Endothelial cell of umbilical vein (primary cell): ENCODE measurements at regions of chr7 and their contacts with region 1.

Region 1: DNA sequence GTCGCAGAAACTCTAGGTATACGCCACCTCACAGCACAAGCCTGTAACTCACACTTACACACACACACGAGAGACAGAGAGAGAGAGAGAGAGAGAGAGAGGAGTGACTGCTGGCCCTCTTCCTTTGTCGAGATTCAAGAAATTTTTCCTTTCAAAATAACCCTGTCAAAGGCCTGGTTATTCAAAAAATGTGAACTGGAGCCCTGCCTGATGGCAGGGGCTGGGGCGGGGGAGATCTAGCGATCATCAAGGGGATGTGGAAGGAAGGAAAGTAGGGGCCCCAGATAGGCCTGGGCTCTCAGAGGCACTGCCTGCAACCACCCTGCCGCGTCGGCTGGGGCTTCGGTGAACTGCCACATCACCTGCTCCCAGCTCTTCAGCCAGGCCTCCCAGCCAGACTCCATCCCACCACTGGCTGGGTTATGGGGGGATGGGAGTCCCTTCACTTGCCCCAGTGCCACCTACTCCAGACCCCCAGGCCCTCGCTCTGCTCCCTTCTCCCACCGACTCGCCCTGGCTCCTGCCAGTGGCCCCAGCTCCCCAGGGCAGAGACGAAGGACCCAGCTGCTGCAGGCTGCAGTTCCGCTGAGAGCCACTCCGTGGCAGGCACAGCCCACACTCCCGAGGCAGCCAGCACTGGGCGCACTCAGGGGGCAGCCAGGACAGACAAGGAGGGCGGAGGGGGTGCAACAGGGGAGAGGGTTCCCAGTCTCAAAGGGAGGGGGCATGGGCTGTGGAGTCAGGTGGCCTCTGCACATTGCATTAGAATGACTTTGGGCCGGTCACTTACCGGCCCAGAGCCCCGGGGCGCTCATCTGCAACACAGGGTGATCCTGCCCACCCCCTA is 15.3 kb downstream of the KCNH2 start:
- DNase-seq: peak; percentile 36
- H3K4me3 ChIP-seq: no peak overlapping the region
- H3K27ac ChIP-seq: no peak overlapping the region
- H3K4me1 ChIP-seq: no peaks in the 10 kb centered on the region
- H3K27me3 ChIP-seq: peaks cover 17 to 23% of the 10 kb centered on the region in 2 experiments
- CTCF ChIP-seq: peak; percentile 81 to 96
- POLR2A ChIP-seq: no peak

Region 2: DNA sequence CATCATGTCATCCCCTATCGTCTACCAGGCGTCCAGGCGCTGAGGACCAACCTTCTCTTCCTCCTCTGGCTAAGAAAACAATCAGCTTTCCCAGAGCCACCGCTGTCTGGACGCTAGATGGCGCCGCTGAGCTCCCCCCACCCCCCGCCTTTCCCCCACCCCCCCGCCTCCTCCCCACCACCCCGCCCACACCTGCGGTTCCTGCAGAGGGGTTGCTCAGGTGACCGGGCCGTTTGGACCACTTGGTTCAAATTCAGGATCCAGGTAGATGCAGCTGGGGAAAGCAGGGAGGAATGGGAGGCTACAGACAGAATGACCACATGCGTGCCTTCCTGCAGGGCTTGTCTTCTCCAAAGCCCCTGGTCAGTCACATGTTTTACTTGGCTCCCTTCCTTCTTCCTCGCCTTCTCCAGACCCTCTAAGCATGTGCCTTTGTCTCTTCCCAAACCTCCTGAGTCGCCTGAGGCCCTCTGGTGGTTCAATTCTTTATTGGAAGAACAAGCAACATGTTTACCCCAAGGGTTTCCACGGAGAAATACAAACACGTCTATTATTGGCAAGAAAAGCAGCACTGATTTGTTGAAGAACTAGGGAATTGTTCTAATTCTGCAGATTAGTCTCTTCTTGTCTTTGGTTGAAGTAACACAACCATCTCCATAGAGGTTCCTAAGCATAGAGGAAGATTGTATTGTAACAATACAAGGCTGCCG is 85.8 kb before region 1 on chr7:
- CTCF ChIA-PET with region 1: interaction called, 20 read pairs
- POLR2A ChIA-PET with region 1: no interaction called
- dilution Hi-C with region 1: no loop called
- intact Hi-C with region 1: no loop called
- DNase-seq: peak; percentile 89
- H3K4me3 ChIP-seq: no peak overlapping the region
- H3K27ac ChIP-seq: no peak overlapping the region
- H3K4me1 ChIP-seq: peaks cover 10% of the 10 kb centered on the region
- H3K27me3 ChIP-seq: peaks cover 8 to 50% of the 10 kb centered on the region in 2 experiments
- CTCF ChIP-seq: peak; percentile 46 to 63
- POLR2A ChIP-seq: no peak

Region 3: DNA sequence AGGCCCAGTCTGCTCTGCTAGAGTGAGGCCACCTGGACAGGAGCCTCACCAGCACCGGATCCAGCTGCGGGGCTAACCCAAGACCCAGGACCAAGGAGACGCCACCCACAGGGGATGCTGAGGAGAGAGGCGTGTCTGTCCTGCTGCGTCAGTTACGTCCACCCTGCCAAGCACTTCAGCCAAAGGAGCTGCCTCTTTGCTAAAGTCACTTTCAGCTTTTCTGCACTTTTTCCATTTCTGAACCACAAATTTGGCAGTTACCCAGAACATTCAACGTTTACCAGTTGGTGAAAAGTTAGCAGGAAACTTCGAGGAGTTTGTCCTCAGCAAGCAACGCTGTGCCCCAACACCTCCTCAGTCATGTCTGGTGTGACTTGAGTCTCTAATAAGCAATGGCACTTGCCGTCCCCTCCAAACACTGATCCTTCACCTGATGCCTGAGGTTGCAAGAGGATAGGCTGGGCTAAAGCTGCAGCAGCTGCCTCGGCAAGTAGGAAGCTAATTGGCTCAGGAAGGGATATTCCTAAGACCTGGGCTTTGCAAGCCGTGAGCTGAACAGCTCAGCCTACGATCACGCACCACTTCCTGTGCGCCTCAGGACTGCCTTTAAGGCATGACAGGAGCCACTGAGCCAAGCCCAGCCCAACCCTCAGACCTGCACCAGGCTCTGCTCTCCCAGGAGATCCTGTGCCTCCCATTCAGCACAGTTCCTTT is 24.8 kb before region 1 on chr7:
- CTCF ChIA-PET with region 1: no interaction called
- POLR2A ChIA-PET with region 1: no interaction called
- dilution Hi-C with region 1: no loop called
- intact Hi-C with region 1: no loop called
- DNase-seq: no peak
- H3K4me3 ChIP-seq: no peak overlapping the region
- H3K27ac ChIP-seq: no peak overlapping the region
- H3K4me1 ChIP-seq: no peaks in the 10 kb centered on the region
- H3K27me3 ChIP-seq: peaks cover 2 to 6% of the 10 kb centered on the region in 2 experiments
- CTCF ChIP-seq: no peak
- POLR2A ChIP-seq: no peak

Region 4: GRCh38 chr7:151008511-151009323 is 45.9 kb after region 1 on chr7:
- CTCF ChIA-PET with region 1: interaction called, 28 read pairs
- POLR2A ChIA-PET with region 1: no interaction called
- dilution Hi-C with region 1: no loop called
- intact Hi-C with region 1: loop called (anchors 1 kb)
- DNase-seq: peak; percentile 62
- H3K4me3 ChIP-seq: no peak overlapping the region
- H3K27ac ChIP-seq: peak overlapping the region; percentile 23
- H3K4me1 ChIP-seq: peaks cover 44% of the 10 kb centered on the region
- H3K27me3 ChIP-seq: no peaks in the 10 kb centered on the region
- CTCF ChIP-seq: peak; percentile 96 to 98
- POLR2A ChIP-seq: peak; percentile 49

Region 5: GRCh38 chr7:151057989-151058780 is 95.4 kb after region 1 on chr7:
- CTCF ChIA-PET with region 1: interaction called, 11 read pairs
- POLR2A ChIA-PET with region 1: no interaction called
- dilution Hi-C with region 1: no loop called
- intact Hi-C with region 1: no loop called
- DNase-seq: peak; percentile 100
- H3K4me3 ChIP-seq: peak overlapping the region in 2 of 3 experiments; percentile 11 to 69
- H3K27ac ChIP-seq: peak overlapping the region; percentile 81
- H3K4me1 ChIP-seq: peaks cover 29% of the 10 kb centered on the region
- H3K27me3 ChIP-seq: no peaks in the 10 kb centered on the region
- CTCF ChIP-seq: no peak
- POLR2A ChIP-seq: peak; percentile 52

Region 6: DNA sequence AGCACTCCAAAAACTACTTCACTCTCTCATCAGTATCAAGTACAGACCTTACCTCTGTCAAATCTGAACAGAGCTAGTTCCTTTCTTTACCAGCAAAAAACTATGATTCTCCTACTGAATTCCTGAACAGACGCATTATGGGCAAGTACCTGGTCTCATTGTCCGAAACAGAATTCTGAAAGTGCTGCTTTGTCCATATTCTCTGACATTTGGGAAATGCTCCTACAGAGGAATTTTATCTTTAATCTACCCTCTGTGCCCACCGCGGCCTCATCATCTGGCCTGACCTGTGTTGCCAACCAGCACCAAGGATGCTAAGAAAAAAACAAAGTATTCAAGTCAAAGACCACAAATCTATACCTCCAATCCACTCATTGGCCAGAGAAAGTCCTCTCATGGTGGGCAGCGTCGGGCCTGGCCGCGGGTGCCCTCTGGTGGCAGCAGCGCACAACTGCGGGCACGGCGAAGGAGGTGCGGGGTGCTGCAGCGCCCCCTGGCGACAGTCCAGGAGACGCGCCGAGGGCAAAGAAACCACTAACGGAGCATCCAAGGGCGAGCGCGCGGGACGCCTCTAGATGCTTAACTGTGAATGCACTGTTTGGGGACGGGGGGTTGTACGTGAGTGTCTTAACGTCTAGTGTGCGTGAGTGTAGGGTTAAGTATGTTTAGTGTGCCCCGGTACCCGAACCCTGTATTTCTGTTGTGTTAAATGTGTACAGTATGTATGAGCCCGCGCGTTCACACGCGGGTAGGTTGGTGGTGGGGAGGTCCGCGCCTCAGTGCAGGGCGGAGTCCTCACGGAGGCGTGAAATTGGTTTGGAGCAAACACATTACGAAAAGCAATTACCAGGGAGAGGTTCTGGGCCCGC is 209.7 kb after region 1 on chr7:
- CTCF ChIA-PET with region 1: interaction called, 8 read pairs
- POLR2A ChIA-PET with region 1: no interaction called
- dilution Hi-C with region 1: no loop called
- intact Hi-C with region 1: loop called (anchors 1 kb)
- DNase-seq: peak; percentile 76
- H3K4me3 ChIP-seq: no peak overlapping the region
- H3K27ac ChIP-seq: no peak overlapping the region
- H3K4me1 ChIP-seq: peaks cover 3% of the 10 kb centered on the region
- H3K27me3 ChIP-seq: peaks cover 21 to 26% of the 10 kb centered on the region in 2 experiments
- CTCF ChIP-seq: peak; percentile 100
- POLR2A ChIP-seq: no peak

Region 7: DNA sequence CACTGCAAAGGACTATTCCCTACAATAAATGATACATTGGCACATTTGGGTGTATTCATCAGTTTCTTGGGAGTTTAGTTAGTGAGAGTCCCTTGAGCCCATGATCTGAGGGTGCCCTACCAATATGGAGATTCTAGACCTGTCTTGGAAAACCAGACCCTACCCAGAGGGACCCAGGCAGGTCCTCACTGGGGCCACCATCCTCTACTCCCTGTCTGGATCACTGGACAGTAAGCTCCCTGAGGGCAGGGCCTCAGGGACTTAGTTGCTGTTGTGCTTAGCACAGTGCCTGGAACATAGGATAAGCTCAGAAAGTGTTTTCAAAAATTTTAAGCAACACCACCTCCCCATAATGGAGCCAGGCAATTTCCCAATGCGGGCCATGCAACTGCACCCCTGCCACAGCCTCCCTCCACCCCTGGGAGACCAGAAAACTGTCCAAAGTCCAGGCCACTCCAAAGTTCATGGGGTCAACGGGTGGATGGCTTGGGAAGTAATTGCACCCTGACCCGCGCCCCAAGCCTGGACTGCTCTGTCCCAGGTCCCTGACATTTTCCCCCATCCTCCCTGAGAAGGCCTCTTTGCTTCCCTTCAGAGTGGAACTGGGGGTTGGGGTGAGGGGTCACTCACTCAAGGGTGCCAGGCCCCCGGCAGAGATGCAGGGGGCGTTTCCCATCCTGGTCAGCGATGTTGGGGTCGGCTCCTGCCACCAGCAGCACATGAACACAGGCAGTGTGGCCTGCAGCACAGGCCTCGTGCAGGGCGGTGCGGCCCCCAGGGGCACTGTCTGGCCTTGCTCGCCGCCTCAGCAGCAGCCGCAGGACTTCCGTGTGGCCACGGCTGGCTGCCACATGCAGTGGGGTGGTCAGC is 223.2 kb after region 1 on chr7:
- CTCF ChIA-PET with region 1: no interaction called
- POLR2A ChIA-PET with region 1: no interaction called
- dilution Hi-C with region 1: no loop called
- intact Hi-C with region 1: no loop called
- DNase-seq: no peak
- H3K4me3 ChIP-seq: no peak overlapping the region
- H3K27ac ChIP-seq: no peak overlapping the region
- H3K4me1 ChIP-seq: no peaks in the 10 kb centered on the region
- H3K27me3 ChIP-seq: peaks cover 12 to 15% of the 10 kb centered on the region in 2 experiments
- CTCF ChIP-seq: no peak
- POLR2A ChIP-seq: no peak